ENCODE measurements at regions of chr2 and their contacts with region 1.

Region 1: GRCh38 chr2:27086090-27086723 is 365 bp upstream of the KHK start:
- DNase-seq: peak; percentile 98
- H3K4me3 Mint-ChIP-seq: peak overlapping the region; percentile 90
- H3K27ac Mint-ChIP-seq: peak overlapping the region; percentile 71
- H3K4me1 Mint-ChIP-seq: peaks cover 22% of the 10 kb centered on the region
- H3K27me3 Mint-ChIP-seq: no peaks in the 10 kb centered on the region

Region 2: DNA sequence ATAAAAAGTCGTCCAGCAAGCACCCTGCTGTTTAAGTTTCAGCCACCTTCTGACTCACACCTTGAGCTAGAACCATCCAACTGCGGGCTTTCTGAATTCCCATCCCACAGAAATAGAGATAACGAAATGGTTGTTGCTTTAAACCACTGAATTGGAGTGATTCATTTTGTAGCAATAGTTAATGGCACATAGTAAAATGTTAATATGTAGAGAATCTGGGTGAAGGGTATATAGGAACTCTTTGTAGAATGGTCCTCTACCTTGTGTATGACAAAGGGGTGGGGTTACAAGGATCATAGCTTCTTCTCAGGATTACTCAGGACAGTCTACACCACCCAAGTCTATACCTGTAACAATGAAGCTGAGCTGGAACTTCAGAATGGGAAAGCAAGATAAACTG is 118.2 kb before region 1 on chr2:
- intact Hi-C with region 1: loop called (anchors 10 kb)
- DNase-seq: no peak
- H3K4me3 Mint-ChIP-seq: no peak overlapping the region
- H3K27ac Mint-ChIP-seq: no peak overlapping the region
- H3K4me1 Mint-ChIP-seq: peaks cover 15% of the 10 kb centered on the region
- H3K27me3 Mint-ChIP-seq: peaks cover 42% of the 10 kb centered on the region

Region 3: DNA sequence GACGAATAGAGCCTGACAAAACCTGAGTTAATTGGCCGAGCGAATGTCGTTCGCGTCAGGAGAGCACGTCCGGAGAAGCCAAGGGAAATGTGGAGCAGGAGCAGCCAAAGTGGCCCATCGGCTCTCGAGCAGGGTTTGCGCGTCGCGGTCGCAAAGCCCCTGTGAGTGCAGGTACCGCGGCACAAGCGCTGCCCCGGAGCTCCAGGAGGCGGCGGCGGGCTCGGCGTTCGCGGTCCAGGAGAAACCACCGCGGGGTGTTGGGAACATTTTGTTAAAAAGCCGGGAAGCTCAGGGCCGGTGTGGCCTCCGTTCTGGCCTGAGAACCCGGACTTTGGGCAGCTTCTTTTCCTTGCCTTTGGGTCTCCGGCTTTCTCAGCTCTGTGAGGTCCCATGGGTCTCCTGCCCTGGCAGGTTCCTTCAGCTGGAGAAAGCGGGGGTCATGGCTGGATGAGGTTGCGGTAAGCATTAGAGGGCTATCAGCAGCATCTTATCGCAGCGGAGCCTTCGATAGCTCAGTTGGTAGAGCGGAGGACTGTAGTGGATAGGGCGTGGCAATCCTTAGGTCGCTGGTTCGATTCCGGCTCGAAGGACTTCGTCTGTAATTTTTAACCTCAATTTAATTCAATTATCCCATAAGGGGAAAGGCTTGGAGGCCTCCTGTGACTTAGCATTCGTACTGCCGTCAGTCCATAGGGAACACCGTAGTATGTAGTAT is 35.8 kb before region 1 on chr2:
- intact Hi-C with region 1: loop called (anchors 1 kb)
- DNase-seq: peak; percentile 92
- H3K4me3 Mint-ChIP-seq: peak overlapping the region; percentile 88
- H3K27ac Mint-ChIP-seq: peak overlapping the region; percentile 98
- H3K4me1 Mint-ChIP-seq: peaks cover 14% of the 10 kb centered on the region
- H3K27me3 Mint-ChIP-seq: peaks cover 2% of the 10 kb centered on the region

Region 4: DNA sequence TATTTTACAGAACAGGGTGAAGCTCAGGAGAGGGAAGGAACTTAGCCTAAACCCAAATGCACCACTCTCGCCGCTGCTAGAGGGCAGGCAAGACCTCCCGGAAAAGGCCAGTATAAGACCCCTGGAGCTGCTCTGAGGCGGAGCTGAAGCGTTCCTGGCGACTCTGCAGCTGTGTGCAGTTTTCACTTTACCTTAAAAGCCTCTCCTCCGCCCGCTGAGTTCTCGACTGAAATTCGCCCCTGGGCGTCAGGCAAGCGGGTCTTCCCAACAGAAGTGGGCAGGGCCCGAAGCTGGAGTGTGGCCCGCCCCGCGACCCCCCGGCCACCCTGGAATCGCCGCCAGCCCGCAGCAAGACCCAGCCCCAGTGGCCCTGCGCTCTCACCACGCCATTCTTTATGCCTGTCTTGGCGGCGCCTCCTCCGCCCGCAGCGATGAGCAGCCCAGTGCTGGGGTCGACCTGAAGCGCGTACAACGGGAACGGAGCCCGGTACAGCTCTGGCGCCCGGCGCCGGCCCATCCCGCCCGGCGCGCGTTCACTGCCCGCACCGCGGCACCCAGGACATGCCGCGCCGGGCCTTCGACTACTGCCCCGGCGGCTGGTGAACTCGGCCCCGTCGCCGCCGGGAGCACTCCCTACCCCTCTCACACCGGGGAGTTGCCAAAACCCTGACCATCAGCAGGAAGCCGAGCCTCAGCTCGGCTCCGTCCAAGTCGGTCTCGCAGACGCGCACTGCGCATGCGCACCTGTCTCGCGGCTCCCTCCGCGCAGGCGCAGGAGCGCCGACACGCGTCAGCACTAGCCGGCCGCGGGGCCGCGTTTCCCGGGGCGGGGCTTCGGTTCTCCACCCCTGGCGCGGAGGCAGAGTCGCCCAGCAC is 47.9 kb after region 1 on chr2 and contains the start of gene PREB:
- intact Hi-C with region 1: loop called (anchors 2 kb)
- DNase-seq: peak; percentile 98
- H3K4me3 Mint-ChIP-seq: peak within 1 kb of the TSS; percentile 96
- H3K27ac Mint-ChIP-seq: peak within 1 kb of the TSS; percentile 95
- H3K4me1 Mint-ChIP-seq: peaks cover 10% of the 10 kb centered on the region
- H3K27me3 Mint-ChIP-seq: peaks cover 2% of the 10 kb centered on the region
- total RNA-seq, gene PREB: 79.8 and 82.6 TPM in 2 replicates

Region 5: DNA sequence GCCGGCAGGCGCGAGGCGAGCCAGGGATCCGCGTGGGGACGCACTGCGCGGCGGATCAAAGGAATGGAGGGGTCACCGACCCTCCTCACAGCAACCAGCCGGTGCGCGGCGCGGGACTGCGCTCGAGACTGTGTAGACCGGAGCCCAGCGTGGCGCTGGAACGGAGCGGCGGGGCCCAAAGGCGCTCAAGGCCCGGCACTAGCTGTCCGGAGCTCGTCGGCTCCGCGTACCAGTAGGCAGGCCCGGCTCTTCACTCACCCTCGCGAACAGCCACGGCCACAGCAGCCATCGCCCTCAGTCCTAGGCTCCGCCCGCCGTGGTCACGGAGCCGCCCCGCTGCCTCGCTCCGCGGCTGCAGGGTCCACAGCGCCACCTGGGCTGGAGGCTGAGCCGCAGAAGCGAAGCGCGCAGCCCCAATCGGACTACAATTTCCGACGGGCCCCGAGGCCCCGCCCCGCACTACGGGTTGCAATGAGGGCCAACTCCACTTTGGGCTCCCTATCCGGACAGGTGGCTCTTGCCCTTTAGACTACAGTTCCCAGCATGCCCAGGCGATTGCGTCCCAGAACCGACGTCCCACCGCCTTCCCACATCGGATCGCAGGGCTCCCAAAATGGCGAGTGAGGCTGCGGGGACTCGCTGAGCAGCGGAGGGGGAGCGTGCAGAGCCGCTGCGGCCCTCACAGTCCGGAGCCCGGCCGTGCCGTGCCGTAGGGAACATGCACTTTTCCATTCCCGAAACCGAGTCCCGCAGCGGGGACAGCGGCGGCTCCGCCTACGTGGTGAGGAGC is 284.0 kb after region 1 on chr2 and contains the starts of genes EIF2B4 and SNX17:
- intact Hi-C with region 1: loop called (anchors 5 kb)
- DNase-seq: peak; percentile 100
- H3K4me3 Mint-ChIP-seq: peak within 1 kb of the TSS; percentile 90
- H3K27ac Mint-ChIP-seq: peak within 1 kb of the TSS; percentile 97
- H3K4me1 Mint-ChIP-seq: peaks cover 23% of the 10 kb centered on the region
- H3K27me3 Mint-ChIP-seq: no peaks in the 10 kb centered on the region
- total RNA-seq, gene EIF2B4: 43.4 and 44.8 TPM in 2 replicates
- total RNA-seq, gene SNX17: 117 and 120 TPM in 2 replicates

Region 6: DNA sequence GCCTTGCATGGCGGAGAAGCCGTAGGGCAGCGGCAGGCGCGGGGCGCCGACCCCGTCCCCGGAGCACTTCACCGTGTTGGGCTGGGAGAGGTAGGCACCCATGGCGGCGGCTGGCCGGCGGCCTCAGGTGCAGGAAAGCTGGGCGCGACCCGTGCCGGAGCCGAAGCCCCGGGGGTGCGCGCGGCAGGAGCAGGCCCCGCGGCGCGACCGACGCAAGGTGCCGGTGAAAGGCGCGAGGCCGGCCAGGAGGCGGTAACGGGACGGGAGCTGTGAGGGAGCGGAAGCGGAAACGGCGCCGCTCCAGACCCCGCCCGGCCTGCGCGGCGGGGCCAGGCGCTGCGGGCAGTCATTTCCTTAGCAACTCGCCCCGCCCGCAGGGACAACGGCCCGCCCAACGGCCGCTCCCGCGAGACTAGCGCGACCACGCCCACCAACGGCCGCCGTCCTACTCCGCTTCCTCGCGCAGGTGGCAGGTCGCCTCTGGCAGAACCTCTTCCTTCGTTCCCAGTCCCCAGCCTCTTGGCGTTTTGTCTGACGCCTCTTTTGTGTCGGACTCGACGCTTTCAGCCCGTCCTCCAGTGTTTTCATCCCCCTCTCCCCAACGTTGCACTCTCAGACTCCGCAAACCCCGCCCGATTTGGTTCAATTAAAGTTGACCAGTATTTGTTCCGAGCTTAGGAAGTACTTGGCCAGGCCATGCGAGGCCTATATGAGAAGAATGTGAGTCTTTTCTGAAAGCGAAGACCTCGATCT is 323.3 kb after region 1 on chr2 and contains the start of gene PPM1G:
- intact Hi-C with region 1: no loop called
- DNase-seq: peak; percentile 96
- H3K4me3 Mint-ChIP-seq: peak within 1 kb of the TSS; percentile 89
- H3K27ac Mint-ChIP-seq: peak within 1 kb of the TSS; percentile 88
- H3K4me1 Mint-ChIP-seq: peaks cover 20% of the 10 kb centered on the region
- H3K27me3 Mint-ChIP-seq: peaks cover 3% of the 10 kb centered on the region
- total RNA-seq, gene PPM1G: 159 and 163 TPM in 2 replicates